ENCODE measurements at regions of chr1 and their contacts with region 1.

Region 1: GRCh38 chr1:231337472-231338269 is at the start of gene EXOC8:
- DNase-seq: peak; percentile 96 to 100 (median 99)
- H3K4me3 ChIP-seq: peak within 1 kb of the TSS; percentile 90 to 97
- H3K4me3 Mint-ChIP-seq: peak within 1 kb of the TSS; percentile 97 to 100 (median 99)
- H3K27ac ChIP-seq: peak within 1 kb of the TSS; percentile 98
- H3K27ac Mint-ChIP-seq: peak within 1 kb of the TSS; percentile 99 to 100 (median 100)
- H3K4me1 ChIP-seq: peaks cover 61% of the 10 kb centered on the region
- H3K4me1 Mint-ChIP-seq: peaks cover 42 to 75% (median 60%) of the 10 kb centered on the region in 4 donors
- H3K27me3 ChIP-seq: no peaks in the 10 kb centered on the region
- H3K27me3 Mint-ChIP-seq: no peaks in the 10 kb centered on the region
- total RNA-seq, gene EXOC8: 37.4 to 37.7 TPM

Region 2: GRCh38 chr1:230867903-230868735 is 469.6 kb before region 1 on chr1 and contains the start of gene C1orf198:
- CTCF ChIA-PET with region 1: no interaction called
- POLR2A ChIA-PET with region 1: no interaction called
- intact Hi-C with region 1: loop called (anchors 5 kb)
- DNase-seq: peak; percentile 61 to 77 (median 68)
- H3K4me3 ChIP-seq: peak within 1 kb of the TSS; percentile 45 to 75
- H3K4me3 Mint-ChIP-seq: peak within 1 kb of the TSS; percentile 87 to 95 (median 90)
- H3K27ac ChIP-seq: peak within 1 kb of the TSS; percentile 44
- H3K27ac Mint-ChIP-seq: peak within 1 kb of the TSS; percentile 43 to 84 (median 69)
- H3K4me1 ChIP-seq: peaks cover 15% of the 10 kb centered on the region
- H3K4me1 Mint-ChIP-seq: peaks cover 9 to 19% (median 14%) of the 10 kb centered on the region in 4 donors
- H3K27me3 ChIP-seq: peaks cover 14% of the 10 kb centered on the region
- H3K27me3 Mint-ChIP-seq: peaks cover 17 to 18% of the 10 kb centered on the region in 2 donors
- total RNA-seq, gene C1orf198: 4.2 to 4.4 TPM

Region 3: DNA sequence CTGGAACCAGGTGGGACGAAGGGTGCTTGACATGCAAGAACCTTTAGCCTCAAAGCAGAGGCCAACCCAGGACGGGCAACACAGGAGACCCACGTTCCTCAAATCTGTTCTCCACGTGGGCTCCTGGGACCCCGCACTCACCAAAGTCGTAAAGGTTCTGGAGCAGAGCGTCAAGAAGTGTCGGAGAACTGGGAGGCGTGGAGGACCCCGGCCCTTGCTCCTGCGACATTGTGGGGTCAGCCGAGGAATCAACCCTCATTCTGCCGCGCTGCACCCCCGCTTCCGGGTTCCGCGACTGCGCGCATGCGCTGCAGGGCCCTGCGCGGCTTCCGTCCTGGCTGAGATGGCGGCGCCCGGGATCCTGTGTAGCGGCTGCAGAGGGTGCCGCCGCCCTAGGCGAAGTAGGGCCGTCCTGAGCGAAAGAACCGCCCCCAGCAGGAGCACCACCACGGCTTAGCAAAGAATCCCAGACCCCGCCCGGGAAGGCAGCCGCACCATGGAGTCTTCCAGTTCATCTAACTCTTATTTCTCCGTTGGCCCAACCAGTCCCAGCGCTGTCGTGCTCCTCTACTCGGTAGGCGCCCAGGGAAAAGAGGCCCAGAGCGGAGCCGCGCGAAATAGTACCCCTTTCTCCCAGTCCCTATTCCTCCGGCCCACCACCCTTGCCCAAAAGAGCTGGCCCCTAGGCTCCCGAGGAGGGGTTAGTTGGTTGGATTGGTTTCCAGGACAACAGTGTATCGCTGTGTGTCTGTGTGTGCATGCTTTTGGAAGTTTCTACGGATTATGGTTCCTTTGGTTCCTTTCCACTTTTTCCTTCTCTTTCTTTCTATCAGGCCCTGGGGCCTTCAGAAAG is 96.6 kb before region 1 on chr1 and contains the start of gene GNPAT:
- CTCF ChIA-PET with region 1: interaction called, 3 read pairs
- POLR2A ChIA-PET with region 1: interaction called, 14 read pairs
- intact Hi-C with region 1: loop called (anchors 1 kb)
- DNase-seq: peak; percentile 87 to 94 (median 91)
- H3K4me3 ChIP-seq: peak within 1 kb of the TSS; percentile 83 to 99
- H3K4me3 Mint-ChIP-seq: peak within 1 kb of the TSS; percentile 95 to 99 (median 98)
- H3K27ac ChIP-seq: peak within 1 kb of the TSS; percentile 93
- H3K27ac Mint-ChIP-seq: peak within 1 kb of the TSS; percentile 85 to 99 (median 98)
- H3K4me1 ChIP-seq: peaks cover 56% of the 10 kb centered on the region
- H3K4me1 Mint-ChIP-seq: peaks cover 55 to 85% (median 71%) of the 10 kb centered on the region in 4 donors
- H3K27me3 ChIP-seq: no peaks in the 10 kb centered on the region
- H3K27me3 Mint-ChIP-seq: no peaks in the 10 kb centered on the region
- total RNA-seq, gene GNPAT: 36.9 to 41.2 TPM

Region 4: GRCh38 chr1:231348442-231348841 is 10.8 kb after region 1 on chr1:
- CTCF ChIA-PET with region 1: no interaction called
- POLR2A ChIA-PET with region 1: interaction called, 11 read pairs
- intact Hi-C with region 1: no loop called
- DNase-seq: no peak
- H3K4me3 ChIP-seq: no peak overlapping the region
- H3K4me3 Mint-ChIP-seq: no peak overlapping the region
- H3K27ac ChIP-seq: no peak overlapping the region
- H3K27ac Mint-ChIP-seq: no peak overlapping the region
- H3K4me1 ChIP-seq: no peaks in the 10 kb centered on the region
- H3K4me1 Mint-ChIP-seq: peaks cover 4 to 12% (median 7%) of the 10 kb centered on the region in 4 donors
- H3K27me3 ChIP-seq: no peaks in the 10 kb centered on the region
- H3K27me3 Mint-ChIP-seq: no peaks in the 10 kb centered on the region

Region 5: DNA sequence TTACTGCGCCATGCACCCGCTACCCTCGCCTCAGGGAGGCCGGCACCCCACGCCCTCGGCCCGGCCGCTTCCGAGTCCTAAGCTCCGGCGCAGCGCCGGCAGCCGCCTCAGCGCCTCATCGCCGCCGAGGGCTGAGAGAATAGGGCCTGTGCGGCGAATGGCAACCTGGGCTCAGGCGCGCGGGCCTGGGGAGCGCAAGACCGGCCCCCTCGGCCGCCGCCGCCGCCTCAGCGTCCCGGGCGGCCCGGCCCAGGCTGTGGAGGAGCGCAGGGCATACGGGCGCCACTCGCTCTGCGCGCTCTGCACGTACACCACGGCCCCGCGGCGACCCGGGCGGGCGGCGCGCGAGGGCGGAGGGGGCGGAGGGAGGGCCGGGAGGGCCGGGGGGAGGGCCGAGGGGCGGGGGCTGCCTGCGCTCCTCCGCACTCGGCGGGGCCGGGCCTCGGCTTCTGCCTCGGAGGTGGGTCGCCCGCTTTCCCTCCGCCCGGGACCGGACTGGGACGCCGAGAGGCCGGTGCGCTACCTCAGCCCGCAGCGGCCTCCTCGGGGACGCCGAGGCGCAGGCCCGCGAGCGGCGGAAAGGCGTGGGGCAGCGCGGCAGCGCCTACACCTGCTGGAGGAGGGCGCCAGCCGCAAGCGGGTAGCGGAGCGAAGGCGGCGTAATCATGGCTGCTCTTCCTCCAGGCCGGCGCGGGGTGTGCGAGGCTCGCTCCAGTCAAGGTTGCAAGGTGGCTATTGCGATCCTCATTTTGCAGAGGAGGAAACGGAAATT is 84.5 kb after region 1 on chr1 and contains the start of gene EGLN1:
- CTCF ChIA-PET with region 1: interaction called, 7 read pairs
- POLR2A ChIA-PET with region 1: interaction called, 52 read pairs
- intact Hi-C with region 1: loop called (anchors 1 kb)
- DNase-seq: peak; percentile 79 to 85 (median 84)
- H3K4me3 ChIP-seq: peak within 1 kb of the TSS; percentile 70 to 80
- H3K4me3 Mint-ChIP-seq: peak within 1 kb of the TSS; percentile 90 to 97 (median 95)
- H3K27ac ChIP-seq: peak within 1 kb of the TSS; percentile 63
- H3K27ac Mint-ChIP-seq: peak within 1 kb of the TSS; percentile 83 to 98 (median 95)
- H3K4me1 ChIP-seq: peaks cover 43% of the 10 kb centered on the region
- H3K4me1 Mint-ChIP-seq: peaks cover 29 to 49% (median 38%) of the 10 kb centered on the region in 4 donors
- H3K27me3 ChIP-seq: no peaks in the 10 kb centered on the region
- H3K27me3 Mint-ChIP-seq: no peaks in the 10 kb centered on the region
- total RNA-seq, gene EGLN1: 23.5 to 29.3 TPM

Region 6: GRCh38 chr1:231612393-231613089 is 274.9 kb after region 1 on chr1:
- CTCF ChIA-PET with region 1: no interaction called
- POLR2A ChIA-PET with region 1: interaction called, 10 read pairs
- intact Hi-C with region 1: no loop called
- DNase-seq: peak; percentile 59 to 66 (median 64)
- H3K4me3 ChIP-seq: peak overlapping the region; percentile 0 to 41
- H3K4me3 Mint-ChIP-seq: peak overlapping the region; percentile 65 to 93 (median 83)
- H3K27ac ChIP-seq: peak overlapping the region; percentile 33
- H3K27ac Mint-ChIP-seq: peak overlapping the region; percentile 28 to 94 (median 90)
- H3K4me1 ChIP-seq: peaks cover 46% of the 10 kb centered on the region
- H3K4me1 Mint-ChIP-seq: peaks cover 48 to 57% (median 51%) of the 10 kb centered on the region in 4 donors
- H3K27me3 ChIP-seq: no peaks in the 10 kb centered on the region
- H3K27me3 Mint-ChIP-seq: peaks cover 0 to 1% of the 10 kb centered on the region in 2 donors

Region 7: GRCh38 chr1:231986631-231987551 is 649.2 kb after region 1 on chr1:
- CTCF ChIA-PET with region 1: no interaction called
- POLR2A ChIA-PET with region 1: no interaction called
- intact Hi-C with region 1: no loop called
- DNase-seq: no peak
- H3K4me3 ChIP-seq: no peak overlapping the region
- H3K4me3 Mint-ChIP-seq: no peak overlapping the region
- H3K27ac ChIP-seq: no peak overlapping the region
- H3K27ac Mint-ChIP-seq: peak overlapping the region in 2 of 7 donors; percentile 49 to 54
- H3K4me1 ChIP-seq: no peaks in the 10 kb centered on the region
- H3K4me1 Mint-ChIP-seq: peaks cover 1 to 8% (median 6%) of the 10 kb centered on the region in 4 donors
- H3K27me3 ChIP-seq: no peaks in the 10 kb centered on the region
- H3K27me3 Mint-ChIP-seq: no peaks in the 10 kb centered on the region